ENCODE measurements at regions of chr19 and their contacts with region 1.

Region 1: DNA sequence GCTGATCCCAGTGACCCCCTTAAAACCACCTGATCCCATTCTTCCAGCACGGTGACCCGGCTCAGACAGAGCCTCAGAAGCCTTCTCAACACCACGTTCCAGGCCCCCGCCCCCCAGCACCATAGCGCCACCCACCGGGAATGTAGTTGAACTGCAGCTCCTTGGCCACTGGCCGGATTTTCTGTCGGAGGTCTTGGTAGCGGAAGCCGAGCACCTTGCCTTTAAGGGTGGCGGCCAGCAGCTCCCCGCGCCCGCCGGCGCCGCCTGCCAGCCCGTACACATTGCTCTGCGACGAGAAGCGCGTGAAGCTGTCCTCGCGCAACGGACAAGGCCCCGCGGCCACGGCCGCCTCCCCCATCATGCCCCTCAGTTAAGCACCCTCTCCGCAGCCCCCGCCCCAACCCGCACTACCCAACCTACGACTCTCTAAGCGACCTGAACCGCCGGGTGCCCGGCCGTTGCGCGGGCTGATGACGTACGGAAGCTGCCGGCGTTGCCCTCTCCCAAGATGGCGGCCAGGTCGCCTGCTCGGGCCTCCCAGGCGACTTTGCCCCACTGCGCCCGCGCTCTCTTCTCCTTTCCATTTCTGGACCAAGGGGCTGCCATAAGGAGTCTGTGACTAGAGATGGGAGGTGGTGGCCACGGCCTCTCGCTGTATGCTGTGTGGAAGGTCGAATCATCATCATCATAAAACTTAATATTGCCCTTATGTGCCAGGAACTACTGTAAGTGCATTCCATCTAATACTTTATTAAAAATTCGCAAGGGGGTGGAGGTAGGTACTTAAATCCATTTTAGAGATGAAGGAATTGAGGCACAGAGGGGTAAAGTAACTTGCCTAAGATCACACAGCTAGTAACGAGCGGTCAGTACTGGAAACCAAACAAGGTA is at the start of gene KPTN:
- DNase-seq: peak; percentile 86
- ATAC-seq: peak; percentile 83
- H3K4me3 ChIP-seq: peak within 1 kb of the TSS; percentile 71 to 92
- H3K27ac ChIP-seq: peak within 1 kb of the TSS; percentile 78
- H3K4me1 ChIP-seq: peaks cover 6 to 18% of the 10 kb centered on the region in 2 experiments; a peak in 2 of 4 replicates
- H3K27me3 ChIP-seq: no peaks in the 10 kb centered on the region
- CTCF ChIP-seq: peak; percentile 68 to 96 (median 92); a peak in 5 of 6 replicates
- POLR2A ChIP-seq: no peak
- RAD21 ChIP-seq: peak; percentile 70
- total RNA-seq, gene KPTN: 23.8 TPM

Region 2: DNA sequence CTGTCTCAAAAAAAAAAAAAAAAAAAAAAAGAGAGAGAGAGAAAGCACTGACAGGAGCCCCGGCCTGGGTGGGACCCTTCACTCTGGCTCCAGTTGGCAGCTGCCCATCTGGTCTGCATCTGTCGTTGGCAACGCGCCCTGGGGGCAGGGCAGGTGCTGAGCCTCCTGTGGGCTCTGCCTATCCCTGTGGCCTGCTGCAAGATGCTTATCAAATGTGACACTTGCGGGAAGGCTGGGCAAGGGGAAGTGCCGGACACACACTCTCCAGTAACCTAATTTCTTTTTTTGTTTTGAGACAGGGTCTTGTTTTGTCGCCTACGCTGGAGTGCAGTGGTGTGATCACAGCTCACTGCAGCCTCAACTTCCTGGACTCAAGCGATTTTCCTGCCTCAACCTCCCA is 10.7 kb after region 1 on chr19:
- CTCF ChIA-PET with region 1: interaction called, 4 read pairs
- POLR2A ChIA-PET with region 1: interaction called, 10 read pairs
- RAD21 ChIA-PET with region 1: no interaction called
- intact Hi-C with region 1: no loop called
- DNase-seq: no peak
- ATAC-seq: no peak
- H3K4me3 ChIP-seq: no peak overlapping the region
- H3K27ac ChIP-seq: no peak overlapping the region
- H3K4me1 ChIP-seq: no peaks in the 10 kb centered on the region
- H3K27me3 ChIP-seq: no peaks in the 10 kb centered on the region
- CTCF ChIP-seq: no peak
- POLR2A ChIP-seq: no peak
- RAD21 ChIP-seq: no peak

Region 3: GRCh38 chr19:47507012-47507411 is 23.0 kb after region 1 on chr19:
- CTCF ChIA-PET with region 1: no interaction called
- POLR2A ChIA-PET with region 1: no interaction called
- RAD21 ChIA-PET with region 1: no interaction called
- intact Hi-C with region 1: no loop called
- DNase-seq: no peak
- ATAC-seq: no peak
- H3K4me3 ChIP-seq: no peak overlapping the region
- H3K27ac ChIP-seq: no peak overlapping the region
- H3K4me1 ChIP-seq: no peaks in the 10 kb centered on the region
- H3K27me3 ChIP-seq: no peaks in the 10 kb centered on the region
- CTCF ChIP-seq: no peak
- POLR2A ChIP-seq: no peak
- RAD21 ChIP-seq: no peak

Measured in HCT116 (cell line).